ENCODE measurements at regions of chr16 and their contacts with region 1.

Region 1: GRCh38 chr16:4116337-4117249 is at the start of gene ADCY9:
- DNase-seq: peak; percentile 83
- ATAC-seq: peak; percentile 56
- H3K4me3 Mint-ChIP-seq: peak within 1 kb of the TSS; percentile 79
- H3K27ac Mint-ChIP-seq: no peak within 1 kb of the TSS; the same call in 1 of the 2 replicates
- H3K4me1 Mint-ChIP-seq: peaks cover 37% of the 10 kb centered on the region
- H3K27me3 Mint-ChIP-seq: peaks cover 32% of the 10 kb centered on the region
- CTCF ChIP-seq: no peak
- total RNA-seq, gene ADCY9: 9.5 to 11.5 TPM (median 10.0 TPM) in 3 replicates

Region 2: GRCh38 chr16:3983081-3983520 is 133.5 kb before region 1 on chr16:
- CTCF ChIA-PET with region 1: interaction called, 11 read pairs
- POLR2A ChIA-PET with region 1: no interaction called
- DNase-seq: peak; percentile 89
- ATAC-seq: peak; percentile 97
- H3K4me3 Mint-ChIP-seq: no peak overlapping the region
- H3K27ac Mint-ChIP-seq: no peak overlapping the region
- H3K4me1 Mint-ChIP-seq: peaks cover 8% of the 10 kb centered on the region
- H3K27me3 Mint-ChIP-seq: peaks cover 9% of the 10 kb centered on the region
- CTCF ChIP-seq: peak; percentile 38; the same call in 1 of the 2 replicates

Region 3: DNA sequence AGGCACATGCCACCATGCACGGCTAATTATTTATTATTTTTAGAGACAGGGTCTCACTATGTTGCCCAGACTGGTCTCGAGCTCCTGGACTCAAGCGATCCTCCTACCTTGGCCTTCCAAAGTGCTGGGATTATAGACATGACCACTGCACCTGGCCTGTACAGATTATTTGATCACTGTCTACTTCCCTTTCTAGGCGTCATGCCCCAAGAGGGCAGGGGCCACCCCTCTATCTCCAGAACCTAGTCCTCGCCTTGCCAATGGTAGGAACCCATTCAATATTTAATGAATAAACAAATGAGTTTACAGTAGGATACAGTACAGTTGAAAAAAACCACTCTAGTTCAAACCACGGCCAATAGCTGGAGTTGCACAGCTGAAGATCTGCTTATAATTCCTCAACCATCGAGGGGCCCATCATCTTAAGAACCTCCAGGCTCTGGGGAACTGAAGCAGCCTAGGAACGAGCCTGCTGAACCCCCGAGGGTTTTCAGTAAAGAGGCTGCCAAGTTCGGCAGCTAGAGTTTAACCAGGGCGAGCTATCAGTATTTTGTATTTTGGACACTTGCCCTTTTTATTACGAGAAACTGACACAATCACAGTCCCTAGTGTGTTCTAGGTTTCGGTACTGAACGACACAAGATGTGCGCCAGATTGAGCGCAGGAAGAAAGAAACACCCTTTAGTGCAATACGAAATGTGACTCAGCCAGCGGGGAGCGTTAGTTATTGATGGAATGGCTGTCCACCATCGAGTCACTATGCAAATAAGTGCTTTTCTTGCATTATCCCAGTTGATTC is 15.0 kb before region 1 on chr16:
- CTCF ChIA-PET with region 1: no interaction called
- POLR2A ChIA-PET with region 1: no interaction called
- DNase-seq: no peak
- ATAC-seq: no peak
- H3K4me3 Mint-ChIP-seq: no peak overlapping the region
- H3K27ac Mint-ChIP-seq: no peak overlapping the region
- H3K4me1 Mint-ChIP-seq: no peaks in the 10 kb centered on the region
- H3K27me3 Mint-ChIP-seq: no peaks in the 10 kb centered on the region
- CTCF ChIP-seq: no peak

Region 4: DNA sequence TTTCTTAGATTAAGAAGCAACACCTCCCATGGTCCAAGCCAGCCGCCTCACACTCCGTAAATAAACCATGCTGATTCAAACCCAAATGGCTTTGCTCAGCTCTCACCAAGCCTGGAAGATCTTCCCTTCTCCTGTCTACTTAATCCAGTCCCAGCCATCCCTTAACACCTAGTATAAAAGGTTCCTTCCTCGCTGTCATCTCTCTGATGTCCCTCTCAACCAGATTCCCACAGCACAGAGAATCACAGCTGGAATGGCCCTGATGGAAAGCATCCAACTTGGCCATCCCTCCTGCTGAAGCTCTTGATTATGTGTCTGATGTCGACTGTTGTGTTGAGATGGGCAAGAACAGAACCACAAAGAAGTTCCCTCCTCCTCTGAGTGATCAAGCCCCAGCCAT is 50.2 kb after region 1 on chr16:
- CTCF ChIA-PET with region 1: no interaction called
- POLR2A ChIA-PET with region 1: no interaction called
- DNase-seq: no peak
- ATAC-seq: no peak
- H3K4me3 Mint-ChIP-seq: no peak overlapping the region
- H3K27ac Mint-ChIP-seq: no peak overlapping the region
- H3K4me1 Mint-ChIP-seq: no peaks in the 10 kb centered on the region
- H3K27me3 Mint-ChIP-seq: no peaks in the 10 kb centered on the region
- CTCF ChIP-seq: no peak

Region 5: DNA sequence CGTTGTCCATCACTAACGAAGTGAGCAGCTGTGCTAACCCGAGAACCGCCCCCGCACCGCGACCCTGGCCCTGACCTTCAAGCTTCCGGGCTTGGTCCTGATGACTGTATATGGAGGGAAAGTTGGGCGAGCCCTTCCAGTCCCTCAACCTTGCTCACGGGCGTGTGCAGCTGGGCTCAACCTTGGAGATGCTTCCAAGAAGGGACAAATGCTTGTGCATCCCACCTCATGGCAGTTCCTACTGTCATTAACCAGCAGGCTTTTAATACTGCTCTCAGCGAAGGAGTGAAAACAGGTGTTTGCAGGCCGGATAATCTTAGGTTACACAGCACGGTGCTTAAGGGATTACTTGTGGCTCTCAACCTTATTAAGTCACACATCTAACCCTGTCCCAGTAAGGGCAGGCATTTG is 91.8 kb after region 1 on chr16:
- CTCF ChIA-PET with region 1: no interaction called
- POLR2A ChIA-PET with region 1: no interaction called
- DNase-seq: no peak
- ATAC-seq: no peak
- H3K4me3 Mint-ChIP-seq: no peak overlapping the region
- H3K27ac Mint-ChIP-seq: no peak overlapping the region
- H3K4me1 Mint-ChIP-seq: no peaks in the 10 kb centered on the region
- H3K27me3 Mint-ChIP-seq: no peaks in the 10 kb centered on the region
- CTCF ChIP-seq: no peak

Measured in WTC11 (cell line).